AG04450 (cell line): ENCODE measurements at regions of chr14 and their contacts with region 1.

Region 1: GRCh38 chr14:61713724-61714414 is 18.6 kb downstream of the HIF1A start:
- DNase-seq: no peak
- H3K4me3 ChIP-seq: no peak overlapping the region
- H3K27ac ChIP-seq: no peak overlapping the region
- H3K27me3 ChIP-seq: no peaks in the 10 kb centered on the region
- CTCF ChIP-seq: no peak

Region 2: GRCh38 chr14:61542848-61543790 is 170.8 kb before region 1 on chr14:
- CTCF ChIA-PET with region 1: no interaction called
- POLR2A ChIA-PET with region 1: no interaction called
- DNase-seq: no peak
- H3K4me3 ChIP-seq: no peak overlapping the region
- H3K27ac ChIP-seq: no peak overlapping the region
- H3K27me3 ChIP-seq: no peaks in the 10 kb centered on the region
- CTCF ChIP-seq: no peak

Region 3: GRCh38 chr14:61698206-61698980 is 15.5 kb before region 1 on chr14:
- CTCF ChIA-PET with region 1: interaction called, 4 read pairs
- POLR2A ChIA-PET with region 1: interaction called, 10 read pairs
- DNase-seq: no peak
- H3K4me3 ChIP-seq: peak overlapping the region; percentile 83
- H3K27ac ChIP-seq: no peak overlapping the region
- H3K27me3 ChIP-seq: no peaks in the 10 kb centered on the region
- CTCF ChIP-seq: no peak

Region 4: DNA sequence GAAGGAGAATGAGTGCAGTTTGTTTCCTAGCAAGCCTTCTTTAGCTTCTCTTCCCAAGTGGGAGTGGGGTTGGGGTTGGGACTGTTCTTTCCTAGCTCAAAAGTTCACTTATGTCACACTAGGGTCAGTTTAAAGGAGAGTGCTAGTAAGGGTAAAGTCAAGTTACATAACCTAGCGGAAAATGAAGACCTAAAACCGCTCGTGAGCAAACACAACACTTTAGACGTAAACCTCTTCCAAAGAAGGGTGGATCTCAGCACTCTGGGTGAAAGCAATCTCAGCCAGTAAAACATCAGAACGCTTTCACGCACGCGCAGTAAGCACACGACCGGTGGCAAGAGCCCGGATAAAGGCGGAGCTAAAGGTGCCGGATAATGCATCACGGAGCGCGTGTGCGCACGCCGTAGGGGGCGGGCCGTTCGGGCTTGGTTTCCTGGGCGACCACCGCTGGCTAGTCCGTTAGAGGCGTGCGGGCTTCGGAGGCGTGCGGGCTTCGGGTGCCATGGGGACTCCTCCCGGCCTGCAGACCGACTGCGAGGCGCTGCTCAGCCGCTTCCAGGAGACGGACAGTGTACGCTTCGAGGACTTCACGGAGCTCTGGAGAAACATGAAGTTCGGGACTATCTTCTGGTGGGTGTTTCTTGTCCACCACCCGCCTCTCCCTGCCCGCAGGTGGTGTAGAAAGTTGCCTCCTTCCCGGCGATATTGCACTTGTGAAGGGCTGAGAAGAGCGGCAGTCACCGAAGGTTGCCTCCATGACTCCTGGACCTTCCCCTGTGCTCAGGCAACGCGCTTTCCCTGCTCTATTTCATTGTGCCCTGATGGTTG is 48.3 kb after region 1 on chr14 and contains the start of gene SNAPC1:
- CTCF ChIA-PET with region 1: no interaction called
- POLR2A ChIA-PET with region 1: no interaction called
- DNase-seq: peak; percentile 97
- H3K4me3 ChIP-seq: peak within 1 kb of the TSS; percentile 95
- H3K27ac ChIP-seq: peak within 1 kb of the TSS; percentile 58
- H3K27me3 ChIP-seq: no peaks in the 10 kb centered on the region
- CTCF ChIP-seq: no peak
- polyA plus RNA-seq, gene SNAPC1: 11.3 and 18.6 TPM in 2 replicates

Region 5: GRCh38 chr14:61822458-61822857 is 108.6 kb after region 1 on chr14:
- CTCF ChIA-PET with region 1: no interaction called
- POLR2A ChIA-PET with region 1: no interaction called
- DNase-seq: no peak
- H3K4me3 ChIP-seq: no peak overlapping the region
- H3K27ac ChIP-seq: no peak overlapping the region
- H3K27me3 ChIP-seq: peaks cover 5% of the 10 kb centered on the region
- CTCF ChIP-seq: no peak